GM23248 (cell line): ENCODE measurements at regions of chr13 and their contacts with region 1.

Region 1: DNA sequence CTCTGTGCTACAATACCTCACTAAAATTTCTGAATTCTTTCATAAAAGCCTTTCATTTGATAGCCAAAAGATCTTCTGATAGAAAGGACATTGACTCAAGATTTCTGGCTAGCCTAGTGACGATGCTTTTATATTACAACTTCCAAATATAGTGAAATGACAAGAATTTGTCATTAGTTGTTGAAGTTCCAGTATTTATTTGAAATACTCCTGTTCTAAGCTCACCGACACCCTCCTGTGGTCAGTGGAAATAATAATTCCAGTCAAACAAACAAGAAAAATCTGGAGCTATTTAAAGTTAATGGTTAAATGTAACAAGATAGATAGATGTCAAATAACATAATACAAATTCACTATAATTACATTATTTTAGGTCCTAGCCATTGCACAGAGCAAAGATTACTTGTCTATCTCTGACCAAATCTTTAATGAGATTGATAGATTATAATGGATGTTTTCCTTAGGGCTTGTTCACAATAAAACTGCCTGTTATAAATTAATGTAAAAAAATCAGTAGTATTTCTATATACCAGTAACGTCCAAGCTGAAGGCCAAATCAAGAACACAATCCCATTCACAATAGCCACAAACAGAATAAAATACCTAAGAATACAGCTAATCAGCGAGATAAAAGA is 195.5 kb downstream of the RGCC start:
- DNase-seq: peak; percentile 80
- H3K4me3 ChIP-seq: no peak overlapping the region
- H3K27ac ChIP-seq: peak overlapping the region; percentile 6; the same call in 1 of the 2 replicates
- H3K4me1 ChIP-seq: peaks cover 15% of the 10 kb centered on the region
- H3K27me3 ChIP-seq: no peaks in the 10 kb centered on the region

Region 2: GRCh38 chr13:41411522-41411921 is 241.3 kb before region 1 on chr13:
- in situ Hi-C with region 1: loop called (anchors 5 kb)
- DNase-seq: peak; percentile 68
- H3K4me3 ChIP-seq: no peak overlapping the region
- H3K27ac ChIP-seq: no peak overlapping the region
- H3K4me1 ChIP-seq: no peaks in the 10 kb centered on the region
- H3K27me3 ChIP-seq: no peaks in the 10 kb centered on the region

Region 3: DNA sequence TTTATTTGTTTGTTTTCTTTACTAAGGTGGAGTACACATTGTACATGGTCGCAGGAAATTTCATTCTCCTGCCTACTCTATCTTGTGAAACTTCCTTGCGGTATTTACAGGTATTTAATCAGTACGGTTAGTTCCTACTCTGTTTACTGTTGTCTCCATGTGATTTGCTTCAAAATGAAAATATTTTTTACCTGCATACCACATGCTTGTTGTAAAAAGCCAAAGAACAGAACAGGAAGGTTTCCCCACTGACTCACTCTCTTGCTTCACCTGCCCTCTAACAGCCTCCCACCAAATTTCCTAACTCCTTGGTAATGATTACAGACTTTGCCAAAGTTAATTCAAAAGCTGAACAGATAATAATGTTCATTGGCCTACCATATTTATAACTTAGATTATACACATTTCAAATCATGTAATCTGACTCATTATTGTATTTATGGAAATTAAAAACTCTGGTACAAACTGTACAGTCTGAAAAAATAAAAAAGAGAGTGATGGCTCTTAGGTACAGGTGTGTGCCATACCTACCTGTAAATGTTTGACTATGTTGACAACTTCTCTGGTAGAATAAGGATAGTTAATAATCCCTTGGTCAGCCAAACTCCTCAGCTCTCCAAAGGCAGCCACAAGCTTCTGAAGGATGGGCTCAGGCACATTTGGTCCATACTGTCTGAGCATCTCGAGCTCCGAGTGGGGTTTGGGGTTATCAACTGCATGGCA is 68.2 kb after region 1 on chr13:
- in situ Hi-C with region 1: no loop called
- DNase-seq: no peak
- H3K4me3 ChIP-seq: no peak overlapping the region
- H3K27ac ChIP-seq: no peak overlapping the region
- H3K4me1 ChIP-seq: no peaks in the 10 kb centered on the region
- H3K27me3 ChIP-seq: no peaks in the 10 kb centered on the region